ENCODE measurements at regions of chr7 and their contacts with region 1.

Region 1: GRCh38 chr7:27767374-27767773 is 27.4 kb downstream of the TAX1BP1 start:
- DNase-seq: no peak
- H3K27ac ChIP-seq: no peak overlapping the region
- CTCF ChIP-seq: no peak

Region 2: DNA sequence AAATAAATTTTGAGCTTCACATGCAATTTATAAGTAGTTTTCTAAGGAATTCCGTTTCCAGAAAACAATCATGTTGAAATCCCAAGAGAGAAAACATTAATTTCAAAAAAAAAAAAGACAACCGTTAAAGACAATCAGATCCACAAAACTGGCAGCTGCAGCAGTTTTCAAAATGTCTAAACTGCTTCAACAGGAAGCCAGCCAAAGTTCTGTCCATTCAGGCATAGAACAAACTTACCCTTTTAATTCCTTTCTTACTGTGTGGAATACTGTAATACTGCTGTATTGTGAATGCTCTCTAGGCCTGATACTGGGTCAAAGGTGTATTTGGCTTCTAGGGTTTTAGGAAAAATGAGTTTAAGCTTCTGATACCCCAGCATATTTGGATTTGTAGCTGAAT is 703.2 kb before region 1 on chr7:
- CTCF ChIA-PET with region 1: interaction called, 11 read pairs
- POLR2A ChIA-PET with region 1: no interaction called
- DNase-seq: no peak
- H3K27ac ChIP-seq: no peak overlapping the region
- CTCF ChIP-seq: no peak